ENCODE measurements at regions of chr17 and their contacts with region 1.

Region 1: DNA sequence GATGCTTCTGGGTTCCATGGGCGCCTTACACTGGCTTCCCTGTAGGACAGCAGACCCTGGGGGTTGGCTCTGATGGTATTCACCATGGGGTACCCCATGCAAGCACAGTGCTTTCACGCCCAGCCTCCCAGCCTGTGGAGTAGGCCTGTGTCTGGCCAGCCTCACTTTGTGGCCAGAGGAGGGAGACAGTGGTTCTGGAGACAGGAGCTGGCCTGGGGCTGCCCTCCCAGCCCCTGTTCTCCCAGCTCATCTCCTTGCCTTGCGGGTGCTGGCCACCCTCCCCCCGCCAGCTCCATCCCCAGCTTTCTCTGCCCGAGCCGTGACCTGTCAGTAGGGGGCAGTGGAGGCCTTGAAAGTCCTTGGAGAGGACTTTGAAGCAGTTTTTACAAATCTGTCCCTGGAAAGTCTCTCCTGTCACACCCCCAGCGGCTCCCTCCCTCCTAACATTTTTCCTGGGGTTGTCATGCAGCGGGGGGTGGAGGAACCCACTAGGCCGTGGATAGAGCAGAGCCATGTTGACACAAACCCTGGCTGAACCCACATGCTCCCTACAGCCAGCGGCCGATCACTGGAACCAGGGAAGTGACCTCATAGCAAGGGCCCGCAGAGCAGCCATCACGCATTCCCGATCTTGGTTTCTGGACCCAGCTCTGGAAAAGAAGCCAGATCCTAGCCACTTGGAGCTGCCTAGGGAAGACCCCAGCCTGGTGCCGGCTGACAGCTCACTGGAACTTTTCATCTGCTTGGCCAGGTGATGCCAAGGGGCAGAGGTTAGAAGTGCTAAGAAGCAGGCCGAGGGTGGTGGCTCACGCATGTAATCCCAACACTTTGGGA is 289.4 kb downstream of the SEC14L1 start:
- DNase-seq: peak; percentile 92
- ATAC-seq: peak; percentile 47
- H3K4me3 Mint-ChIP-seq: no peak overlapping the region
- H3K27ac Mint-ChIP-seq: peak overlapping the region; percentile 13
- H3K4me1 Mint-ChIP-seq: peaks cover 91% of the 10 kb centered on the region
- H3K27me3 Mint-ChIP-seq: no peaks in the 10 kb centered on the region

Region 2: DNA sequence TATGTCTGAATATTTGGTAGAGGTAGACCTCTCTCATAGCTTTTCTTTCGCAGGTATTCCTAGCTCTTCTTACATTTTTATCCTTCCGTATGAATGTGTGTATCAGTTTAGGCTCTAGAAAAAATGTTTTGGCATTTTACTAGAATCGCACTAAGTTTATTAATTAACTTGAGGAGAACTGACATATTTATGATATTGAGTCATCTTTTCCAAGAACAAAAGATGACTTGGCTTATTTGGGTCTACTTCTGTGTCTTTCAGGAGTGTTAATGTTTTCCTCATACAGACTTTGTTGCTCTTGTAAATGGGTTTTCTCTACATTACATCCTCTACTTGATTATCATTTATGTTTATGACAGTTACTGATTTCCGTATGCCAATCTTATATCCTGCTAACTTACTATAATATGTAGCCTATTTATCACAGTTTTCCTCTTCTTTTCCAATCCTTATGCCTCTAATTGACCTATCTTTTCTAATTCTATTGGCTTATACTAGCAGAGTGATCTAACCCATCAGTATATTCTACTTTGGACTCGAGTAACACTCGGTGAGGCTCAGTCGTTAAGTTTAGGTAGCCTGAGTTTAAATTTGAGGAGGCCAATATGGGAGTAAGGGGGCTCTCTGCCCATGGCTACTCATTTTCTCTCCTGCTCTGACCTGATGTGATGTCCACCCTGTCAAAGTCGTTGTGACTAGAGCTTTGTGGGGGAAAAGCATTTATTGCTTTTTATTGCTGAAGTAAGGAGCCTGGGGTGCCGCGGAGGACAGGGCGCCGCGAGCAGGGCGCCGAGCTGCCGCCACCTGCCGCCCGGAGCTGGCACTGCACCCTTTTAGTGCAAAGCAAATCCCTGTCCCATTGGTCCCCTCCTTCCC is 806.6 kb before region 1 on chr17:
- CTCF ChIA-PET with region 1: no interaction called
- POLR2A ChIA-PET with region 1: no interaction called
- intact Hi-C with region 1: no loop called
- DNase-seq: peak; percentile 87
- ATAC-seq: peak; percentile 96
- H3K4me3 Mint-ChIP-seq: no peak overlapping the region
- H3K27ac Mint-ChIP-seq: no peak overlapping the region
- H3K4me1 Mint-ChIP-seq: peaks cover 7% of the 10 kb centered on the region
- H3K27me3 Mint-ChIP-seq: peaks cover 7% of the 10 kb centered on the region

Region 3: DNA sequence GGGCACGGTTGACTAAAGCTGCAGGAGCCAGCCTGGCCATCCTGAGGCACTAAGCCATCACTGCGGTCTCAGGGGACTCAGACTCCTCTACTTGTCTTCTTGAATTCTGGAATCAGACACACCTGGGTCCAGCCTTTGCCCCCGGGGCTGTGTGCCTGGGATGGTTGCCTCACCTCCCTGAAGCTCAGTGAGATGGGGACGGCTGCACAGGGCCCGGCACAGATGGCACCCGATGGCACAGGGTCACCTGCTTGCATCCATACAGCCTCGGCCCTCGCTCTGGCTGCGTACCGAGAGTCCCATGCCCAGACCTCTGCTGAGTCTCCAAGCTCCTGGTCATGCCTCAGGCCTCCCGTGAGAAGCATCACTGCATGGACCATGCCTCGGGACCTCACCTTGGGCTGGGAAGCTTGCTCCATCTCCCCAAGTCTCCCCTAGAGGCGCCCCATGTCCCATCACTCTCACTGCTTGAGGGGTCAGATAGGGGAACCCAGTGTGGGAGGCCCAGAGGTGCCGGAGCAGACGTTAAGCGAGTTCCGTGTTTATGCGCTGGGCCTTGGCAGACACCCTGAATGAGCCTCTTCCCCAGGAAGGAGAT is 26.9 kb after region 1 on chr17:
- CTCF ChIA-PET with region 1: interaction called, 27 read pairs
- POLR2A ChIA-PET with region 1: interaction called, 5 read pairs
- intact Hi-C with region 1: no loop called
- DNase-seq: peak; percentile 68
- ATAC-seq: no peak
- H3K4me3 Mint-ChIP-seq: peak overlapping the region; percentile 96
- H3K27ac Mint-ChIP-seq: peak overlapping the region; percentile 98
- H3K4me1 Mint-ChIP-seq: peaks cover 47% of the 10 kb centered on the region
- H3K27me3 Mint-ChIP-seq: no peaks in the 10 kb centered on the region

Region 4: DNA sequence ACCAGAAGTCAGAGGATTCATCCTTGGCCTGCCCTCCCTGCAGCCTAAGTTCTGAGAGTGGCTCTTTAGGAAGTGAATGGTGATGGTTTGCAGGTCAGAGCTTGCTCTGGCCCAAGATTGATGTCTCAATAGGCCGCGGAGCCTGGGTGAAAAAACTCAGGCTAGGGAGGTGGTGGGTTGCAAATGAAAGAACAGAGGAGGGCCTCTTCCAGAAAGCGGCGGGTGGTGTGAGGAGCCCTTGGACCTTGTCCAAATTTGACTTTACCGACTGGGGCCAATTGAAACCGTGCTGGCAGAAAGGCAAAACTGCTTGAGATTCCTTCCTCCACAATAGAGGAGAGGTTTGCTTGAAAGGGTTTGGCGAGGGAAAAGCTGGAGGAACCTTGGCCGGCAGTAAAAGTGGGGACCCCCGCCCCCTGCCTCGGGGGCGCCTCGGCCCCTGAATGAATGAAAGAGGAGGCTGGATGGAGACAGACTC is 41.9 kb after region 1 on chr17:
- CTCF ChIA-PET with region 1: interaction called, 18 read pairs
- POLR2A ChIA-PET with region 1: interaction called, 5 read pairs
- intact Hi-C with region 1: loop called (anchors 5 kb)
- DNase-seq: no peak
- ATAC-seq: no peak
- H3K4me3 Mint-ChIP-seq: peak overlapping the region; percentile 70
- H3K27ac Mint-ChIP-seq: peak overlapping the region; percentile 86
- H3K4me1 Mint-ChIP-seq: peaks cover 96% of the 10 kb centered on the region
- H3K27me3 Mint-ChIP-seq: no peaks in the 10 kb centered on the region

Region 5: GRCh38 chr17:77494664-77495435 is 64.7 kb after region 1 on chr17:
- CTCF ChIA-PET with region 1: interaction called, 57 read pairs
- POLR2A ChIA-PET with region 1: no interaction called
- intact Hi-C with region 1: loop called (anchors 1 kb)
- DNase-seq: peak; percentile 84
- ATAC-seq: peak; percentile 58
- H3K4me3 Mint-ChIP-seq: no peak overlapping the region
- H3K27ac Mint-ChIP-seq: peak overlapping the region; percentile 63
- H3K4me1 Mint-ChIP-seq: peaks cover 4% of the 10 kb centered on the region
- H3K27me3 Mint-ChIP-seq: no peaks in the 10 kb centered on the region

Measured in activated CD4-positive, alpha-beta T cell treated with anti-CD3 and anti-CD28 coated beads for 36 hours (primary cell).